Dorsolateral prefrontal cortex (tissue), 120 donors: ENCODE measurements at regions of chr7 and their contacts with region 1.

Region 1: DNA sequence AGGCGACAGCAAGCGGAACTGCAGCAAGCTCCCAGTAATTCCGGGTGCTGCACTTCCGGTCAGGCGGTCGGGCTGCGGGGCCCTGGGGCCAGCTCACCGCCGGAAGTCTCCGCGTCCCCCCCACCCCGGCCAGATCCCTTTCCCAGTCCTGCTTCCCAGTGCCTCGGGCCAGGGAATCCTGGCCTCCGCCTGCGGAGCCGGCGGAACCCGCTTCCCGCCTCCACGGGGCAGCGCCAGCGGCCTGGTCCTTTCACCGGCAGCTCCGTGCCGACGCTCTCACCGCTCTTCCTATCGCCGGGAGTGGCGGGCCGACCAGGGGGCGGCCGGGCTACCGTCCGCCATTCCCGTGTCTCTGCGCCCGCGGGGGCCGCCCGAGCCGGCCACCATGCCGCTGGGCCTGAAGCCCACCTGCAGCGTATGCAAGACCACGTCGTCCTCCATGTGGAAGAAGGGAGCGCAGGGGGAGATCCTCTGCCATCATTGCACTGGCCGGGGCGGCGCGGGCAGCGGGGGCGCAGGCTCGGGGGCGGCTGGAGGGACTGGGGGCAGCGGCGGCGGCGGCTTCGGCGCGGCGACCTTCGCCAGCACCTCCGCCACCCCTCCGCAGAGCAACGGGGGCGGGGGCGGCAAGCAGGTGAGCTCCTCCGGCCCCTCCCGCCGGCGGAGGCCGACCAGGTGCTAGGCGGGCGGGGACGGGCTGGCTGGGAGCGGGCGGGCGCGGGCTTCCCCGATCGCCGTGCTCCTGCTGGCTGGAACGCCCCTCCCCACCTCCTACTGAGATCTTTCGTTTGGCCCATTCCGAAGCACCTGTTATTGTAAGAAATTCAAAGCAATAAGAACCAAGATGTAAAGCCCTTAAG is at the start of gene GATAD1:
- DNase-seq: peak; percentile 80 to 95 (median 93)
- H3K4me3 ChIP-seq: peak within 1 kb of the TSS; percentile 59 to 100 (median 96)
- H3K27ac ChIP-seq: peak within 1 kb of the TSS; percentile 29 to 98 (median 91)
- H3K27me3 ChIP-seq: no peaks in the 10 kb centered on the region
- CTCF ChIP-seq: peak in 54 of 56 donors; percentile 92 to 99 (median 98)
- total RNA-seq, gene GATAD1: 31.7 to 95.3 (median 53.2) TPM

Region 2: GRCh38 chr7:92134271-92135051 is 313.1 kb before region 1 on chr7 and contains the start of gene CYP51A1:
- intact Hi-C with region 1: loop called (anchors 5 to 10 kb)
- DNase-seq: peak; percentile 88 to 97 (median 94)
- H3K4me3 ChIP-seq: peak within 1 kb of the TSS; percentile 66 to 100 (median 95)
- H3K27ac ChIP-seq: peak within 1 kb of the TSS; percentile 85 to 100 (median 97)
- H3K27me3 ChIP-seq: no peaks in the 10 kb centered on the region
- CTCF ChIP-seq: peak in 33 of 56 donors; percentile 1 to 51 (median 25)
- total RNA-seq, gene CYP51A1: 49.1 to 122 (median 85.7) TPM

Region 3: GRCh38 chr7:92178927-92179924 is 268.3 kb before region 1 on chr7 and contains the start of gene LRRD1:
- intact Hi-C with region 1: loop called (anchors 2 kb)
- DNase-seq: peak; percentile 79 to 94 (median 87)
- H3K4me3 ChIP-seq: peak within 1 kb of the TSS; percentile 52 to 88 (median 73)
- H3K27ac ChIP-seq: peak within 1 kb of the TSS; percentile 13 to 98 (median 90)
- H3K27me3 ChIP-seq: no peaks in the 10 kb centered on the region
- CTCF ChIP-seq: peak; percentile 86 to 100 (median 98)
- total RNA-seq, gene LRRD1: 0.21 to 4.2 (median 0.92) TPM in 117 of 120 experiments, not detected in the others

Region 4: GRCh38 chr7:92404170-92404614 is 43.4 kb before region 1 on chr7:
- intact Hi-C with region 1: no loop called
- DNase-seq: no peak
- H3K4me3 ChIP-seq: no peak overlapping the region
- H3K27ac ChIP-seq: peak overlapping the region in 45 of 59 donors; percentile 1 to 71 (median 41)
- H3K27me3 ChIP-seq: no peaks in the 10 kb centered on the region
- CTCF ChIP-seq: peak in 14 of 56 donors; percentile 8 to 49 (median 20)

Region 5: GRCh38 chr7:92421676-92422435 is 25.7 kb before region 1 on chr7:
- intact Hi-C with region 1: loop called (anchors 2 kb)
- DNase-seq: no peak
- H3K4me3 ChIP-seq: no peak overlapping the region
- H3K27ac ChIP-seq: no peak overlapping the region
- H3K27me3 ChIP-seq: peaks cover 0 to 7% (median 0%) of the 10 kb centered on the region in 45 donors
- CTCF ChIP-seq: no peak

Region 6: DNA sequence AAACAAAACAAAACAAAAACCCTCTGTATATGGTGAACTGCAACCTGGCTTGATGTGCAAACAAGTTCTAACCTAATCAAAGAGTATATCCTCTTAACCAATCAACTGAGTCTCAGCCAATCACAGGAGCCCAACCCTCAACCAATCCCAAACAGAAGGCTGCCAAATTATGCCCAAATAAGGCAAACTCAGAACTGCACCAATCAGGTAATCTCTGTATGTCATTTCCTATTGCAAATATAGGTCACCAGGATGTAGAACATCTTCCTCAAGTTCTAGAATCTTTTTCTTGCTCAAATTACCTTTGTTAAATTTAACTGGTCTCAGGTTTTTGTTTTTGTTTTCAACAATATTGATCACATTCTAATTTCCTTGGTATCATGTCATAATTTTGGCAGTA is 137.4 kb after region 1 on chr7:
- intact Hi-C with region 1: no loop called
- DNase-seq: no peak
- H3K4me3 ChIP-seq: no peak overlapping the region
- H3K27ac ChIP-seq: peak overlapping the region in 3 of 59 donors; percentile 1 to 17 (median 4)
- H3K27me3 ChIP-seq: no peaks in the 10 kb centered on the region
- CTCF ChIP-seq: no peak

Region 7: DNA sequence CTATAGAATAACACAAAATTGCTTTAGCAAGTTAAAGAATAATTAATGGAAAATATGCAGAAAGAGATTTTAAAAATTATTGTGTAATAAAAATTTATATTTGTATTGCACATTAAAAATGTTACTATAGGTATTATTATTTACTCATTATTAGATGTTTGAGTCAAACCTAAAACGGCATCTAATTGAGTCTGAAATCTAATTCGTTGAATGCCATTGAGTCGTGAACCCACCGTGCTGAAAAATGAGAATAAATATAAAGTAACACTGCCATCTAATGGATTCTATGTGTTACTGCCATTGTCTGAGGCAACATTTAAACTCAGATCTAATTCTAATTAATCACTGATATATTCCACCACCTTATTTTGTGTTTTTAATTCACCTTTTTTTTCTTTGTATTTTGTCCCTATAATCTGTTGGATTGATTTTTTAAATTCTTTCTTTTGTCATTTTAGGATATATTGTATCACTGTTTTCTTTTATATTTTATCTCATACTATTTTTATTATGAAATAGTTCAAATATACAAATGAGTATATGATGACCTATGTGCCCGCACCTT is 608.0 kb after region 1 on chr7:
- intact Hi-C with region 1: loop called in 1 of 2 experiments (anchors 10 kb)
- DNase-seq: no peak
- H3K4me3 ChIP-seq: peak overlapping the region in 1 of 59 donors; percentile 5
- H3K27ac ChIP-seq: no peak overlapping the region
- H3K27me3 ChIP-seq: peaks cover 0 to 4% (median 0%) of the 10 kb centered on the region in 45 donors
- CTCF ChIP-seq: peak; percentile 65 to 96 (median 82)